PC-3 (cell line): ENCODE measurements at regions of chr3 and their contacts with region 1.

Region 1: DNA sequence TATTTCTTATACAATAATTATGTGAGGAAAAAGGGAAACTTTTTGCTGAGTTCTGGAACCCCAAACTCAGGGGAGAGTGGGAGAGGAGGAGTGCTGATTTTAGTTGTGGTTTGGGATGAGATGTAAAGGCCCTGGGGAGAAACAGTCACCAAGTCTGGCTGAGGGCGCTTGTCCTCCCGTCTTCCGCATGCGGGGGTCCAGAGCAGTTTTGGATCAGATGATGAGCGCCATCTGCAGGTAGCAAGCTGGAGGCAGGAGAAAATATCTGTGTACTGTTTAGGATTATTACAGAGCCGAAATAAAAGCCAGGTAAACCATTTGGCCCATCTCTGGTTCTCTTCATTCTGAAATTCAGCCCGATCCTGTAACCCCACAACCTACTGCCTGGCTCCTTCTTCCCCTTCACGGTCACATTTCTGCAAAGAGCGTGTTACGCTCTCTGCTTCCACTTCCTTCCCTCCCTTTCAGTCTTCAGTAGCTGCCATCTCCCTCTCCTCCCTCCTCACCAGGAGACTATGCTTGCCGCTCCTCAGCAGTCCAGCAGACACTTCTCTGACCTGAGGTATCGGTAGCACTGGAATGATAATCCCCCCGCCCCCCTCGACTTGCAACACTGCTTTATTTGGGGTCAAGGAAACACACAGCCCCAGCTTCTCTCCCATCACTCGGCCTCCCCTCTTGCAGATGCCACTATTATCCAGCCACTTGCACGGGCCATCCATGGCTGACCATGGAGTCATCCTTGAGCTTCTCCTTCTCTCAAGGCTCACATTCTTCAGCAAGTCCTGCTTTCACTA is 1.4 kb upstream of the PARP14 start:
- DNase-seq: peak; percentile 92
- ATAC-seq: peak; percentile 61
- H3K4me3 ChIP-seq: peak overlapping the region; percentile 94
- H3K27ac ChIP-seq: peak overlapping the region; percentile 36; the same call in 1 of the 2 replicates
- H3K4me1 ChIP-seq: peaks cover 23% of the 10 kb centered on the region
- H3K27me3 ChIP-seq: no peaks in the 10 kb centered on the region
- CTCF ChIP-seq: peak; percentile 96

Region 2: DNA sequence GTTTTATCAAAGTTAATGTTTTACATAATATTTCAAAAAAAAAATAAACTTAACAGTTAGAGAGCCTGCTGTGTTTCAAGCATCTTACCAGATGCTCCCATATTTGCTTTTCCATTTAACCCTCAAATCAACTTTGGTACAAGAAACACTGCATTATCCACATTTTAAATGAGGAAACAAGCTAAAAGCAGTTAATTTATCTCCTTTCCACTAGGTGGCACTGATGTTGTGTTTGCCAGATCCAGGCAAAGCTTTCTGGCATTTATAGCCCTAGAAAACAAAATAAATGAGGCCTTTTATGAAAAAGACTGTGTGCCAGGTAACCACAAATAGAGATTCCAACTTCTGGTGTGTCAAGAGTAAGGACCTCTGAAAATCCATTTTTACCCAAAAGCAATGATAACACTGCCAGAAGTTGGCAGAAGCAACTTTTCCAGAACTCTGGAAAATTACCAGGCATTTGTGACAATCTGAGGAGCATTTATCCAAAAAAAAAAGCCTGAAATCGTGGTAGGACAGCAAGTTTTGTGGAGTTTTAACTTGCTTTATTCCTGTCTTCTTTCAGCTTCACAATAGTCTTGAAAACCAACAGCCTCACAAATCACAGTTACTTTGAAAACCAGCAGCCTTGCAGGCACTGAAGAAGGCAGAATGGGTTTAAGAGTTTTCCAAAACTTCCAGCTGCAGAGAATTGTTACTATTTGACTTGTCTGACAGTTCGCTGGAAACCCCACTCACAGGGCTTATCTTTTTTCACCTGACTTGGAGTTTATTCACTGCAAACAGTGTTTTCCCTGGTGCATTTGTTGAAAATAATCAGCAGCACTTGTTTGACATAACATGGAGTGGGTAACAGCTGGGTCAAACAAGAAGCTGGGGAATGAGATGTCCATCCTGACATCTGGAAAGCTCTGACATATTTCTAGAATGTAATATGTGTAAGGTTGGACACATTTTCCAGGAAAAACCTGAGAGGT is 286.1 kb before region 1 on chr3:
- CTCF ChIA-PET with region 1: interaction called, 10 read pairs
- POLR2A ChIA-PET with region 1: no interaction called
- intact Hi-C with region 1: loop called (anchors 5 kb)
- DNase-seq: peak; percentile 71
- ATAC-seq: peak; percentile 57
- H3K4me3 ChIP-seq: no peak overlapping the region
- H3K27ac ChIP-seq: no peak overlapping the region
- H3K4me1 ChIP-seq: no peaks in the 10 kb centered on the region
- H3K27me3 ChIP-seq: no peaks in the 10 kb centered on the region
- CTCF ChIP-seq: peak; percentile 93

Region 3: GRCh38 chr3:122458992-122459391 is 220.3 kb before region 1 on chr3:
- CTCF ChIA-PET with region 1: no interaction called
- POLR2A ChIA-PET with region 1: no interaction called
- intact Hi-C with region 1: loop called (anchors 1 kb)
- DNase-seq: peak; percentile 75
- ATAC-seq: peak; percentile 81
- H3K4me3 ChIP-seq: no peak overlapping the region
- H3K27ac ChIP-seq: no peak overlapping the region
- H3K4me1 ChIP-seq: no peaks in the 10 kb centered on the region
- H3K27me3 ChIP-seq: no peaks in the 10 kb centered on the region
- CTCF ChIP-seq: peak; percentile 83

Region 4: DNA sequence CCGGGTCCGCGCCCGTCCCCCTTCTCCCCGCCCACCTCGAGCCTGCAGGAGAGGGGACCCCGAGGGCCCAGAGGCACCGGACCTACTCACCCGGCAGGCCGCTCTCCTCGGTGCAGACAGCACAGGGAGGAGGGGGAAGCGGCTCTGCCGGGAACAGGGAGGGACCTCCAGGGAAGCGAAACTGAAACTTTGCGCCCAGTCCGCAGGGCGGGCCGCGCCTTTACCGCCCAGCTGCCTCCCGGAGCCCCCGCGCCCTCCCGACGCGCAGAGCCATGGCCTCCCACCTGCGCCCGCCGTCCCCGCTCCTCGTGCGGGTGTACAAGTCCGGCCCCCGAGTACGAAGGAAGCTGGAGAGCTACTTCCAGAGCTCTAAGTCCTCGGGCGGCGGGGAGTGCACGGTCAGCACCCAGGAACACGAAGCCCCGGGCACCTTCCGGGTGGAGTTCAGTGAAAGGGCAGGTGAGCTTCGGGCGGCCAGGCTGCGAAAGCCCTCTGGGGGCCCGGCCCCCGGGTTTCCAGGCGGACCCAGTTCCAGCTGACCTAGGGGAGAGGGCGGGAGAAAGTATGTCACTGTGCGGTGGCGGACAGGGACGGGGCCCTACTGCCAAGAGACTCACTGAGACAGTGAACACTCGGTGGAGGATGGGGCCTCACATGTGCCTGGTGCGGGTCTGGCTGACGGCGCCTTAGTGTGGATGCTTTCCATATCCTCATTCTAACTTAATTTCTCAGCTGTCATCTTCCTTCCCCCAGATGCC is 114.9 kb before region 1 on chr3 and contains the starts of genes DTX3L and PARP9:
- CTCF ChIA-PET with region 1: interaction called, 3 read pairs
- POLR2A ChIA-PET with region 1: no interaction called
- intact Hi-C with region 1: loop called (anchors 1 kb)
- DNase-seq: peak; percentile 83
- ATAC-seq: peak; percentile 89
- H3K4me3 ChIP-seq: peak within 1 kb of the TSS; percentile 81
- H3K27ac ChIP-seq: peak within 1 kb of the TSS; percentile 81
- H3K4me1 ChIP-seq: peaks cover 20% of the 10 kb centered on the region
- H3K27me3 ChIP-seq: no peaks in the 10 kb centered on the region
- CTCF ChIP-seq: no peak
- total RNA-seq, gene DTX3L: 11.1 and 11.9 TPM in 2 replicates
- total RNA-seq, gene PARP9: 13.8 and 14.8 TPM in 2 replicates

Region 5: GRCh38 chr3:122572940-122573412 is 106.3 kb before region 1 on chr3:
- CTCF ChIA-PET with region 1: no interaction called
- POLR2A ChIA-PET with region 1: no interaction called
- intact Hi-C with region 1: loop called (anchors 1 kb)
- DNase-seq: peak; percentile 98
- ATAC-seq: peak; percentile 95
- H3K4me3 ChIP-seq: no peak overlapping the region
- H3K27ac ChIP-seq: peak overlapping the region; percentile 88
- H3K4me1 ChIP-seq: peaks cover 12% of the 10 kb centered on the region
- H3K27me3 ChIP-seq: no peaks in the 10 kb centered on the region
- CTCF ChIP-seq: no peak

Region 6: GRCh38 chr3:122714273-122714672 is 35.0 kb after region 1 on chr3:
- CTCF ChIA-PET with region 1: no interaction called
- POLR2A ChIA-PET with region 1: no interaction called
- intact Hi-C with region 1: no loop called
- DNase-seq: no peak
- ATAC-seq: no peak
- H3K4me3 ChIP-seq: no peak overlapping the region
- H3K27ac ChIP-seq: no peak overlapping the region
- H3K4me1 ChIP-seq: no peaks in the 10 kb centered on the region
- H3K27me3 ChIP-seq: no peaks in the 10 kb centered on the region
- CTCF ChIP-seq: no peak

Region 7: DNA sequence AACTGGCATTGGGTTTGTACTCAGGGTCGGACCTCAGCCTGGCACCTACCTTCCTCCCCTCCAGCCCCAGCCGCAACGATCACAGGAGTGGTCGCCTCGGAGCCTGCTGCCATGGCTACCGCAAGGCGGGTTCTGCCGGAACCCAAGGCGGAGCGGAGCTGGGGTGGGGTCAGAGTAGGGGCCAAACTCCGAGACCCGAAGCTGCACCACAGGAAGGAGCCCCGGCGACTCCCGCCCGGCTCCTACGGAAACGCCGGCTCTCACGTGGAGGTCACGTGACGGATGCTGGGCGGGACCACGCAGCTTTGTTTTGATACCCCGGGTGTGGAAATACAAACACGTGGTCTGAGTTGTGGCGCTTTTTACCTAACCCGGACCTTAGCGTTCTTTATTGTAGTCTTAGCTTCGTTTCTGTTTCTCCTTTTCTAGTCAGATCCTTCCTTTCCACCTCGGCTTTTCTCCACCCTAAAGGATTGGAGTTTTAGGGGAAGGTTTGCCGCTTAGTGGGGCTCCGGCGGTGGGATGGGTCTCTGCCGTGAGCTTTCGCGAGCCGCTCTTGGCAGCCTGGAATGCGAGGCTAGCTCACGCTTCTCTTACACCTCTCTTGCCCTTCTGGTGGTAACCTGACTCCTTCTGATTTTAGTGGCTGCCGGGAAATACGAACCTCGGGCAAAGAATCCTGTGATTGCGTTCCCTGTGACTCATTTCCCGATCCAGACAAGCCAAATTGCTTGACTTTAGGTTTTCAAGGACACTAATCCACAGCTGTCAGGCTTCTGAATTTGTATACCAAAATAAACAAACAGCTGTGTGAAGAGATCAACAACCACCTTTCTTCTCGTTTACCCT is 114.5 kb after region 1 on chr3 and contains the start of gene HSPBAP1:
- CTCF ChIA-PET with region 1: no interaction called
- POLR2A ChIA-PET with region 1: no interaction called
- intact Hi-C with region 1: loop called (anchors 2 kb)
- DNase-seq: peak; percentile 95
- ATAC-seq: peak; percentile 65
- H3K4me3 ChIP-seq: peak within 1 kb of the TSS; percentile 81
- H3K27ac ChIP-seq: peak within 1 kb of the TSS; percentile 89
- H3K4me1 ChIP-seq: peaks cover 33% of the 10 kb centered on the region
- H3K27me3 ChIP-seq: no peaks in the 10 kb centered on the region
- CTCF ChIP-seq: no peak
- total RNA-seq, gene HSPBAP1: 6.4 and 13.4 TPM in 2 replicates